Posterior vena cava (tissue), 2 donors: ENCODE measurements at regions of chr20 and their contacts with region 1.

Region 1: DNA sequence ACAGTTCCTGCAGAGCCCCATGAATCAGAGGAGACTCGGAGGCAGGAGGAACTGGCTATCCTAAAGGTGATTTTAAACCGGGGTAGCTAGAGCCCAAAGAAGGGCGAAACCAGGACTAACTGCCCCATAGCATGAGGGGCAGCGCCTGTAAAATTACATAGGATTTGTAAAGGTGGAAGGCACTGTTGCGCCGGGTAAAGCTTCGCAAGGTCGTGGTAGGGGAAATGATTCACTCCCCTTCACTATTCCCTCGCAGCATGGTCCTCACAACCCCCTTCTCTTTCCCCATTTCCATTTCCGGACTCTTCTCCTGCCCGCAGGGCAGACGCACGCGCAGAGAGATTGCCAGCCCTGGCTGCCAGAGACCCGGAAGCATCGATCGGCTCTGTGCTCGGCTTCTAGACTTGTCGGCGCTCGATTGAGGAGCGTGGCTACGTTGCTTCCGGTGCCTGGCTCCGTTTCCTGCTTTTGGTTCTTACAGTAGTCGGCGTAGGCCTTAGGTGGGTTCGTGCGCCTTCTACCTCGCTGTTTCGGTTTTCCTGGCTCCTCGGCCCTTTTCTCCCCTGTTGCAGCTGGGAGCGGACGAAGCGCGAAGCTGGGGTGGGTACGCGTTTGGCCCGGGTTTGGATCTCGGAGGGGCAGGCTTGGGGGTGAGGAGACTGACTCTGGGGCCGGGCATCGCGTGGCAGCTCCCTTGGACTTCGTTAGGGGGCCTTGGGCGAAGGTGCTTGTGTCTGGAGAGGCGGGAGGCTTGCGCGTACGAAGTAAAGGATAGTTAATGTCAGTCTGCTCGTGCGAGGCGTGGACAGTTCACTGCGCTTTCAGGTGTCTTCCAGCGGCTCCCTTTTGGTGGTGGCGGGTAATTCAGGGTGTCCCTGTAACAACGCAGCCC is at the start of gene SNRPB2:
- DNase-seq: peak; percentile 98
- total RNA-seq, gene SNRPB2: 37.4 to 41.5 TPM

Region 2: DNA sequence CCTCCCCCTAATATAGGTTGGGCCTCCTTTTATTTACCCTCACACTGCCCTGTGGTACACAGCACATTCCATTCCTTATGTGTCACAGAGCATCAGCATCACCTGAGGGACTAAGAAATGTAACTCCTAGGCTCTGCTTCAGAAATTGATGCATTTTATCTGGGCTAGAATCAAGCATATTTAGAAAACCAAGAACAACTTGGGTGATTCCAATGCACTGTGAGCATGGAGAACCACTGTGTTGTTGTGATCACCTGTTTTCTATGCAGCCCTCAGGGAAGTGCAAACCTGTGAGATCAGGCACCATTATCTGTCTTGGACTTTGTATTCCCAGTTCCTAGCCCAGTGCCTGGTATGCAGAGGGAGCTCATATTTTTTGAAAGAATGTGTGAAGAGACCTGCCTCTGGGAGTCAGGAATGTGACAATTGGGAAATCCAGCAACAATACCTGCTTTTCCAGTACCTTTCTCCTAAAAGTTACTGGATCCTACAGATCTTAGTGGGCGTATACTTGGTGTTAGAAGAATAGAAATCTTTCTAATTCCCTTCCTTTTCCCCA is 1414.8 kb after region 1 on chr20:
- intact Hi-C with region 1: loop called in 1 of 2 experiments (anchors 5 kb)
- DNase-seq: no peak